Right ventricle myocardium inferior (tissue), 1 donor: ENCODE measurements at regions of chr5 and their contacts with region 1.

Region 1: DNA sequence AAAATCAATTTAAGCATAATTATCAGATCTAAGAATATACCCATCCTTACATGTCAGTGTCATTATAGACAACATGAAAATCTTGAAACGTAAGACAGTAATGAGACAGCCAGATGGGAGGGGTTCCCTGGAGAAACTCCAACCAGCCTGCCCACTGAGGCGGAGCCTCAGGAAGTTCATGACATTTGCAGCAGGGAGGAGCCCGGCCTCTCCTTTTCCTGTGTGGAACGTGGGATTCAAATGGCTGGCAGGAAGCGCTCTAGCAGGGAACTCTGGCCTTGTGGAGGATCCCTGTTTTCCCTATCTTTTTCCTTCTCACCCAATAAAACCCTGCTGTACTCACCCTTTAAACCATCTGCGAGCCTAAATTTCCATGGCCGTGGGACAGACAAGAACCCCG is 176.6 kb upstream of the KCNN2 start:
- DNase-seq: peak; percentile 53
- ATAC-seq: no peak

Region 2: GRCh38 chr5:114325541-114325940 is 140.3 kb after region 1 on chr5:
- intact Hi-C with region 1: loop called (anchors 10 kb)
- DNase-seq: no peak
- ATAC-seq: no peak